ENCODE measurements at regions of chr2 and their contacts with region 1.

Region 1: GRCh38 chr2:120559401-120559800 is 176.3 kb upstream of the GLI2 start:
- DNase-seq: peak; percentile 100
- H3K4me3 ChIP-seq: no peak overlapping the region
- CTCF ChIP-seq: no peak

Region 2: GRCh38 chr2:120546048-120546864 is 13.1 kb before region 1 on chr2:
- CTCF ChIA-PET with region 1: interaction called, 13 read pairs
- POLR2A ChIA-PET with region 1: interaction called, 14 read pairs
- DNase-seq: peak; percentile 98
- H3K4me3 ChIP-seq: 0 out of 2 replicates have a peak overlapping the region, but pooled peaks have one; percentile 15
- CTCF ChIP-seq: peak; percentile 8

Region 3: DNA sequence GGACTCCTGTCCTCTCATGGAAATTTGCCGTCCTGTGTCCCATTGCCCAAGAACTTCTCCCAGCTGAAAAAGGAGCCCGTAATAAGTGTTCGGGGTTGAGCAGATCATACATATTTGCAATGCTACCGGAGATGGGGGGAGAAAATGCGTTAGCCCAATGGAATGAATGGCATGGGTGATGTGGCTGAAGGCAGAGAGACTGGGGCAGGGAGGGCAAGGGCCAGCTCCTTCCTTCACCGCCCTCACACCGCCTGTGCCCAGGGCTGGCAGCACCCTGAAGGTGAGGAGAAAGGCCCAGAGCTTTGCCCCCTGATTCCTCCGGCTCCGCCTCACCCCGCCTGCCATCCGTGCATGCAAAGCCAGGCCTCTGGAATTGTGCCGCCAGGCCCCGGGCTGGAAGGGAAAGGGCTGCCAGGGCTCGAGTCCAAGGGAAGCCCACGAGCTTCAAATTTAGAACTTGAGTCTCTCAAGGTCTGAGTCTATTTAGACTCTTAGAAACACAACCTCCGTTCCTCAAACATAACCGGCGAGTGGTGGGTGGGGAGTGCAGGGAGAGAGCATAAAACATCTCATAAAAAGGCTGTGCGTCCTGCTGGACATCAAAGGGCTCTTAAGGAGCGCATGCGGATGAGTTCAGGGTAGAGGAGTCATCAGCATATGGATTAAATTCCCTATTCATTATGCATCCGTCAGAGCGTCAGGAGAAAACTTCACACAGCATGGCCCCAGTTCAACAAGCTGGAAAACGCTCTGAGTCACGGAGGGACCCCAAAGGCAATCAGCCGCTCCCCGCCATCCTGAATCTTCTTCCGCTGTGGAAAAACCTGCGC is 54.6 kb after region 1 on chr2:
- CTCF ChIA-PET with region 1: interaction called, 3 read pairs
- POLR2A ChIA-PET with region 1: interaction called, 11 read pairs
- DNase-seq: peak; percentile 91
- H3K4me3 ChIP-seq: peak overlapping the region; percentile 37
- CTCF ChIP-seq: no peak